ENCODE measurements at regions of chr6 and their contacts with region 1.

Region 1: DNA sequence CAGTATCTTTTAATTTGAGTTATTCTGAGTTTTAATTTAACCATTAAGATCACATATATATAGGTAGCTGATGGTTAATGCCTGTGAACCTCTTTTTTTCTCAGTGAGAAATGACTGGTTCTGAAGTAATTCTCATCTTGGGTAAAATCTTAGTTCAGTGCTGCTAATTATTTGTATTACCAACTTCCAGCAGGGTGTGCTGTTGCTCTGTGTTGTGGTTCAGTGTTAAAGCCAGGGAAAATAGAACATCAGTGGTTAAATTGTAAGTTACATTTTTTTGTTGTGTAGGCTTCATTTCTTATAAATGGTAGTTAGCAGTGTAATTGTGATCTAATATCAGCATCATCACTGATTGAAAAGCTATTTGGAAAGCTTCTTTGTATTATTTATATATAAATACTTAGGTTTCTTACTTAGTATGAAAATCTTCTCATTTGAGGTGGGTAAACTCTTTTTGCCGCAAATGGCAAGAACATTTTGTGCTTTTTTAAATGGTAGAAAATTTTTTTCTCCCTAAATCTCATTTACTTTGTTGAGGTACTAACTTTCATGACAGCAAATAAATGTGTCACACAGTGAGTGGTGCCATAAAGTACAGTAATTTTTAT is 43.7 kb downstream of the CDC5L start:
- DNase-seq: peak; percentile 63
- ATAC-seq: peak; percentile 66
- H3K4me3 Mint-ChIP-seq: no peak overlapping the region
- H3K27ac Mint-ChIP-seq: no peak overlapping the region
- H3K4me1 Mint-ChIP-seq: peaks cover 13% of the 10 kb centered on the region
- H3K27me3 Mint-ChIP-seq: no peaks in the 10 kb centered on the region
- CTCF ChIP-seq: peak; percentile 70

Region 2: GRCh38 chr6:44381739-44382138 is 49.5 kb before region 1 on chr6:
- CTCF ChIA-PET with region 1: no interaction called
- POLR2A ChIA-PET with region 1: no interaction called
- intact Hi-C with region 1: no loop called
- DNase-seq: no peak
- ATAC-seq: no peak
- H3K4me3 Mint-ChIP-seq: no peak overlapping the region
- H3K27ac Mint-ChIP-seq: no peak overlapping the region
- H3K4me1 Mint-ChIP-seq: peaks cover 3% of the 10 kb centered on the region
- H3K27me3 Mint-ChIP-seq: no peaks in the 10 kb centered on the region
- CTCF ChIP-seq: no peak

Region 3: GRCh38 chr6:44441091-44441855 is 10.1 kb after region 1 on chr6:
- CTCF ChIA-PET with region 1: interaction called, 10 read pairs
- POLR2A ChIA-PET with region 1: no interaction called
- intact Hi-C with region 1: no loop called
- DNase-seq: no peak
- ATAC-seq: no peak
- H3K4me3 Mint-ChIP-seq: no peak overlapping the region
- H3K27ac Mint-ChIP-seq: no peak overlapping the region
- H3K4me1 Mint-ChIP-seq: peaks cover 11% of the 10 kb centered on the region
- H3K27me3 Mint-ChIP-seq: no peaks in the 10 kb centered on the region
- CTCF ChIP-seq: no peak

Region 4: DNA sequence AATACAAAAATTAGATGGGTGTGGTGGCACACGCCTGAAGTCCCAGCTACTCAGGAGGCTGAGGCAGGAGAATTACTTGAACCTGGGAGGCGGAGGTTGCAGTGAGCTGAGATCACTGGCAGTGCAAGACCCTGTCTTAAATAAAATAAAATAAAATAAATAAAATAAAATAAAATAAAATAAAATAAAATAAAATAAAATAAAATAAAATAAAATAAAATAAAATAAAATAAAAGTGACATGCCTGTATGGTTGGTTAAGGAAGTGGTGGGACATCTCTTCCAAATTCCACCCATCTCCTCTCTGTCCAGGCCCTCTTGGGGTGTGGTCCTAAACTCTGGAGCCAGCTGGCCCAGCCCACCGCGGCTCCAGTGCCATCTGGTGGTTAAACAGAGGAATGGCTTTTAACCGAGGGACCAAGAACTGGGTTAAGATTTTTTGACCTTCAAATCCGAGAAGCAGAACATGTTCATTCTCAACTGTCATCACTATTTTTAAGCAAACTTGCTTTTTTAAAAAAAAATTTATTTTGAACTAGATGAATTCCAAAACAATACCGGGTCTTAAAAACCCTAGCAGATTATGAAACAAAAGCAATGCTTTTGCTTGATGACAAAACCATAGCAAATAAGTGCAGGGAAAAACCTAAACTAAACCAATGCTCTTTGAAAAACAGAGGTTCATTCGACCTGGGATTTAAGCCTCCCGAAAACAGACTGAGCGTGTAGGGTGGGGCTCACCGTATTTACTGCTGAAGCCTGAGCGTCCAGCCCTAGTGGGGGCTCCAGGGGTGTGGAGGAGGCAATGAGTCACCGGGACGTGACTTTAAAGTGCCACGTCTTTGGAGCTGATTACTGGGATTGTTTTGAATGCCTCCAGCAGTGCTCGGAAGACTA is 25.1 kb after region 1 on chr6:
- CTCF ChIA-PET with region 1: interaction called, 31 read pairs
- POLR2A ChIA-PET with region 1: interaction called, 3 read pairs
- intact Hi-C with region 1: no loop called
- DNase-seq: peak; percentile 46
- ATAC-seq: peak; percentile 87
- H3K4me3 Mint-ChIP-seq: no peak overlapping the region
- H3K27ac Mint-ChIP-seq: no peak overlapping the region
- H3K4me1 Mint-ChIP-seq: peaks cover 1% of the 10 kb centered on the region
- H3K27me3 Mint-ChIP-seq: peaks cover 6% of the 10 kb centered on the region
- CTCF ChIP-seq: peak; percentile 85

Region 5: GRCh38 chr6:44464527-44465310 is 33.5 kb after region 1 on chr6:
- CTCF ChIA-PET with region 1: interaction called, 14 read pairs
- POLR2A ChIA-PET with region 1: interaction called, 4 read pairs
- intact Hi-C with region 1: no loop called
- DNase-seq: no peak
- ATAC-seq: no peak
- H3K4me3 Mint-ChIP-seq: no peak overlapping the region
- H3K27ac Mint-ChIP-seq: no peak overlapping the region
- H3K4me1 Mint-ChIP-seq: no peaks in the 10 kb centered on the region
- H3K27me3 Mint-ChIP-seq: peaks cover 3% of the 10 kb centered on the region
- CTCF ChIP-seq: no peak